ENCODE measurements at regions of chr6 and their contacts with region 1.

Region 1: DNA sequence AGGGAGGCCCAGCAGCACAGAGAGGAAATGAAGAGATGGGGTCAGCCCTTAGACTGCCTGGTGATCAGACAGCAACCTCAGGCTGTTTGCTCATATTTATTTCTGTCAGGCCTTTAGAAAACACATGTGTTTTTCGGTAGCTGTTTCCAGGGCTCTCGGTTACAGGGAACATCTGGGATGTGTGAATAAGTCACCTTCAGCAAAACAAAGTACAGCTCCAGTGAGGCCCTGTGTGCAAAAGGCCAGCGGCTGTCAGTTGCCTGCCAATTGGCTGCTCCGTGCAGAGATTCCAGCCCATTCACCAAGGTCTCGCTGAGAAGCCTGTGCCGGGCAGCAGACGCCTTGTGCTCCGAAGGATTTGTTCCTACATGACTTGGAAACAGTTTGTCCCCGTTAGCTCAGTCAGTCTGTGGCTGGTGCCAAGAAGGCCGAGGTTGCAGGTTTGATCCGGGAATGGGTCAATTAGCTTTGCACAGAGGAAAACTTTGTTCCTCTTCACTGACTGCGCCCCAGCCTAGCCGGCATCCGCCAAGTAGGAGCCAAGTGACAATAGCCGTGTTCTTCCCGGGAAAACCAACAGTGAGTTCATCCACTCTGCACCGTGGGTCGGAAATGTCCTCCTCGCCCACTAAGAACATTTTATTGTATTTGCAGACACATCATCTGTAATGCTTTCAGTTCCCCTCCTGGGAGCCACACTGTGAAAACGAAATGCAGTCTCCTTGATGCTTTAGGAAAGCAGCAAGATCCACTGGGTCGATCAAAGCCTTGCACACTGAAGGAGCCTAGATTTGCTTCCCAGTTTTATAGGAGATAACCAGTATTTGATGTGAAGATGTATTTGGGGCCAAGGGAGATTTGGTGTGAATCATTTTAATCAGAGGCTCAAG is 315.4 kb upstream of the CDYL start:
- DNase-seq: peak; percentile 48 to 88 (median 82)
- ATAC-seq: peak; percentile 87 to 94 (median 92)
- H3K4me3 ChIP-seq: peak overlapping the region in 3 of 12 donors; percentile 4 to 24 (median 19)
- H3K27ac ChIP-seq: peak overlapping the region; percentile 29 to 76 (median 60)
- H3K4me1 ChIP-seq: peaks cover 0 to 23% (median 13%) of the 10 kb centered on the region in 12 donors
- H3K27me3 ChIP-seq: no peaks in the 10 kb centered on the region
- CTCF ChIP-seq: no peak
- POLR2A ChIP-seq: no peak

Region 2: GRCh38 chr6:4358414-4359114 is 102.3 kb before region 1 on chr6:
- intact Hi-C with region 1: loop called in 1 of 10 experiments (anchors 10 kb)
- DNase-seq: peak; percentile 88 to 97 (median 90)
- ATAC-seq: peak; percentile 93 to 98 (median 96)
- H3K4me3 ChIP-seq: peak overlapping the region in 1 of 12 donors; percentile 12
- H3K27ac ChIP-seq: peak overlapping the region; percentile 76 to 99 (median 90)
- H3K4me1 ChIP-seq: peaks cover 0 to 19% (median 9%) of the 10 kb centered on the region in 12 donors
- H3K27me3 ChIP-seq: no peaks in the 10 kb centered on the region
- CTCF ChIP-seq: no peak
- POLR2A ChIP-seq: peak in 1 of 2 donors; percentile 46

Region 3: GRCh38 chr6:4370066-4370465 is 90.8 kb before region 1 on chr6:
- intact Hi-C with region 1: loop called in 1 of 10 experiments (anchors 10 kb)
- DNase-seq: no peak
- ATAC-seq: no peak
- H3K4me3 ChIP-seq: no peak overlapping the region
- H3K27ac ChIP-seq: peak overlapping the region in 11 of 12 donors; percentile 51 to 92 (median 69)
- H3K4me1 ChIP-seq: peaks cover 2 to 48% (median 23%) of the 10 kb centered on the region in 12 donors
- H3K27me3 ChIP-seq: no peaks in the 10 kb centered on the region
- CTCF ChIP-seq: no peak
- POLR2A ChIP-seq: no peak

Region 4: GRCh38 chr6:4610256-4610655 is 149.4 kb after region 1 on chr6:
- intact Hi-C with region 1: loop called in 1 of 10 experiments (anchors 5 kb)
- DNase-seq: peak in 4 of 5 donors; percentile 44 to 71 (median 63)
- ATAC-seq: peak in 3 of 4 donors; percentile 53 to 70 (median 59)
- H3K4me3 ChIP-seq: no peak overlapping the region
- H3K27ac ChIP-seq: peak overlapping the region in 1 of 12 donors; percentile 39
- H3K4me1 ChIP-seq: peaks cover 0 to 44% (median 17%) of the 10 kb centered on the region in 12 donors
- H3K27me3 ChIP-seq: no peaks in the 10 kb centered on the region
- CTCF ChIP-seq: no peak
- POLR2A ChIP-seq: no peak

Measured in heart left ventricle (tissue), 16 donors.